Aorta (tissue), 5 donors: ENCODE measurements at regions of chr4 and their contacts with region 1.

Region 1: DNA sequence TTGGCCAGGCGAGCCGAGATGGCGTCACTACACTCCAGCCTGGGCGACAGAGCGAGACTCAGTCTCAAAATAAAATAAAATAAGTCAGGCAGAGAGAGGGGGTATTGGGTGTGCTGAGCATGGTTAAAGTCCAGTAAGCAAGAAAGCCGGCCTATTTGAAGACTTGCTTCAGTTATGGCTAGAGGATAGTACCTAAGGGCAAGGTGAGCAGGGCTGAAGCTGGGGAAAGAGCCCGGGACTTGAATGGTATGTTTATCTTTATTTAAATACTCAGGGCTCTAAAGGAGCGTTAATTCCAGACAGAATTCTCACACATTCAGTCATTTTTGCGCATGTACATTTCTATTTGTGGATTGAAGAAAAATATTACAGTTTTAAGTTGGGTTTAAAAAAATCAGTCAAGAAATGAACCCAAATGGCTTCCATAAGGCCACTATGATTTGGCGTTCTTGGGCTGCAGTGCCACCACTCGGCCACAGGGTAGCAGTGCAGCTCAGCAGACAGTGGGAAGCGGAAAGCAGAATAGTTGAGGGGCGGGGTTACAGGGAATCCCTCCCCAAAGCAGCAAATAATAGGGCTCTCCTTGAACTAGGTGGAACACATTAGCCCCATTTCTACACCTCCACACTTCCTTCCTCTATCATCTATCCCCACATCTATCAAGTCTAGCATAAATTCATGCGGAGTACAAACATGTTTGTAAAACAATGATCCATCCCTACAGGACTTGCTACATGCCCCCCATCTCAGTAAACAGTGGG is 37.2 kb upstream of the SH3D19 start:
- DNase-seq: peak; percentile 83 to 92
- ATAC-seq: peak; percentile 94
- H3K4me3 ChIP-seq: no peak overlapping the region
- H3K27ac ChIP-seq: no peak overlapping the region
- H3K4me1 ChIP-seq: no peaks in the 10 kb centered on the region
- H3K27me3 ChIP-seq: no peaks in the 10 kb centered on the region

Region 2: DNA sequence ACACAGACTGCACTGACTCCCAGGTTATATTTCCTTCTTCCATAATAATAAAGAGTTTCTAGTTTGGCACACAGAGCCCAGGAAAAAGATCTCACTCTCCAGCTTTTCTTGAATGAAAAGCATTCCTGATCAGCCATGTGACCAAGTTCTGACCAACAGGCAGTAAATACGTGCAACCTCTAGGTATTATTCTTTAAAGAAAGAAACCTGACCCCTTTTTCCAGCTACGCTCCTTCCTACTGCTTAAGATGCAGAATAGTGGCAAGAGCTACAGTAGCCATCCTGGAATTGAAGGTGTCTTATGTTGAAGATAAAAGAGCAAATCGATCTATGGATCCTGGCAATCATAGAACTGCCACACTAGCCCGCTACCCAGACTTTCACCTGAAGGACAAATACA is 424.2 kb before region 1 on chr4:
- intact Hi-C with region 1: no loop called
- DNase-seq: no peak
- ATAC-seq: no peak
- H3K4me3 ChIP-seq: no peak overlapping the region
- H3K27ac ChIP-seq: no peak overlapping the region
- H3K4me1 ChIP-seq: peaks cover 0 to 2% of the 10 kb centered on the region in 2 donors
- H3K27me3 ChIP-seq: no peaks in the 10 kb centered on the region

Region 3: DNA sequence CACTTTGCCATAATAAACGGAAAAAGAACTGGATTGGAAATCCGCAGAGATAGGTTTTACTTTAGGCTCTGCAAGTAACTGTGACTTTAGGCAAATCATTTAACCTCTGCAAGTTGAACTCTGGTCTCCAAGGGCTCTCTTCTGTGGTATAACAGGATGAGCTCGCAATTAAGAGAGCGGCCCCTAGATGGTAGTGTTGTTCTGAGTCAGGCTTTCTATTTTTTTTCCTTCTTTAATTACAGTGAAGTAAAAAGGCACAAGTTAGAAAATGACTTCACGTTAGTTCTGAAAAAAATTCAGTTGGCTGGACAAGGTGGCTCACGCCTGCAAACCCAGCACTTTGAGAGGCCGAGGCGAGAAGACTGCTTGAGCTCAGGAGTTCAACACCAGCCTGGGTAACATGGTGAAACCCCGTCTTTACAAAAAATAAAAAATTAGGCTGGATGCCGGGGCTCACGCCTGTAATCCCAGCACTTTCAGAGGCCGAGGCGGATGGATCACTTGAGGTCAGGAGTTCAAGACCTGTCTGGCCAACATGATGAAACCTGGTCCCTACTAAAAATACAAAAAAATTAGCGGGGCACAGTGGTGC is 245.1 kb before region 1 on chr4:
- intact Hi-C with region 1: loop called (anchors 5 to 10 kb)
- DNase-seq: peak in 1 of 2 donors; percentile 55
- ATAC-seq: peak; percentile 84
- H3K4me3 ChIP-seq: no peak overlapping the region
- H3K27ac ChIP-seq: no peak overlapping the region
- H3K4me1 ChIP-seq: no peaks in the 10 kb centered on the region
- H3K27me3 ChIP-seq: no peaks in the 10 kb centered on the region

Region 4: GRCh38 chr4:151129801-151130200 is 232.8 kb before region 1 on chr4:
- intact Hi-C with region 1: no loop called
- DNase-seq: no peak
- ATAC-seq: no peak
- H3K4me3 ChIP-seq: no peak overlapping the region
- H3K27ac ChIP-seq: no peak overlapping the region
- H3K4me1 ChIP-seq: no peaks in the 10 kb centered on the region
- H3K27me3 ChIP-seq: no peaks in the 10 kb centered on the region

Region 5: DNA sequence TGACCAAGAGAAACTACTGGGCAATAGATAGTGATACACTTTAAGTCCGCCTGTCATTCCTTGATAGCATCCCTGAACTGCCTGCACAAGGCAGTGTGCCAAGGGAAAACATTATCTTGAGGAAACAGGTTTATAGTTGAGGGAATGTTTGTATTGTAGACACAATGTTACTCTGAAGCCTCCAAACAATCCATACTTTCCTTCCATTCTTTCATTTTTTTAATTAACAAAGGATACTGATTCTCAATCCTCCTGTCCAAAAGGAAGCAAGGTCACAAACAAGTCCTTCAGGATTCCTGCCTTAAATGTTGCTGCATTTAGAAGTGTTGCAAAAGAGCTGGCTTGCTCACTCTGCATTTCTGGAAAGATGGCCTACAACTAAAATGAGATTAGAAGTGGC is 147.3 kb before region 1 on chr4:
- intact Hi-C with region 1: no loop called
- DNase-seq: no peak
- ATAC-seq: no peak
- H3K4me3 ChIP-seq: no peak overlapping the region
- H3K27ac ChIP-seq: no peak overlapping the region
- H3K4me1 ChIP-seq: no peaks in the 10 kb centered on the region
- H3K27me3 ChIP-seq: no peaks in the 10 kb centered on the region

Region 6: DNA sequence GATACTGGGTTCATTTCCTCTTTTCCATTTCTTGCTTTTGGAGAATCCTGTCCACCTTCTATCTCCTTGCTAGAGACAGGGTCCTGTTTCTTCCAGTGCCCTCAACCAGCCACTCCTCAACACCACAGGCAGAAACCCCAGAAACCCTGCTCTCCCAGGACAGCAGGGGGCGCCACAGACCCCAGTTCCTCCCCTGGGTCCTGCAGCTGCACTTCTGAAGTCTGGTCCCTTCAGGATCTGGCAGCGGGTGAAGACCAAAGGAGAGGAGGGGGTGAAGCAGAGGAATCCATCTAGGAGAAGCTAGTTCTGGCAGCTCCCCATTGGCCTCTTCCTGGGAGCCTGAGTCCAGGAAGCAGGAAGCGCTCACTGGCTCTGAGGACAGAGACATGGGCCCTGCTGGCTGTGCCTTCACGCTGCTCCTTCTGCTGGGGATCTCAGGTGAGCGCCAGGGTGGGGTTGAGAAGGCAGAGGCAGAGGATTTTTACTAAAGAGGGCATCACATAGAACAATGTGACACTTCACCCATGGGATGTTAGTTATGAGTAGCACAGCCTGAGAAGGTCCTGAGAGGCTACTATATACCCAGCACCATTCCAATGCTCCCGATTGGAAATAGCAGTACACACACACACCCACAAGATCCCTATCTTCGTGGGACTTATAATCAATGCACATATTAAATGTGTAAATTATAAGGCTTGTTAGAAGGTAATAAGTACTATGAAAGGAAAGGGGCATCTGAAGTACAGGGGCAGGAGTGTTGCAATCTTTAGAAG is 85.6 kb before region 1 on chr4 and contains the start of gene PRSS48:
- intact Hi-C with region 1: loop called (anchors 1 to 5 kb)
- DNase-seq: peak; percentile 60 to 78
- ATAC-seq: peak; percentile 69
- H3K4me3 ChIP-seq: no peak within 1 kb of the TSS
- H3K27ac ChIP-seq: no peak within 1 kb of the TSS
- H3K4me1 ChIP-seq: no peaks in the 10 kb centered on the region
- H3K27me3 ChIP-seq: no peaks in the 10 kb centered on the region
- total RNA-seq, gene PRSS48: not detected

Region 7: GRCh38 chr4:151563194-151563593 is 200.6 kb after region 1 on chr4:
- intact Hi-C with region 1: no loop called
- DNase-seq: no peak
- ATAC-seq: no peak
- H3K4me3 ChIP-seq: no peak overlapping the region
- H3K27ac ChIP-seq: no peak overlapping the region
- H3K4me1 ChIP-seq: no peaks in the 10 kb centered on the region
- H3K27me3 ChIP-seq: no peaks in the 10 kb centered on the region

Region 8: GRCh38 chr4:151614561-151614960 is 252.0 kb after region 1 on chr4:
- intact Hi-C with region 1: loop called in 1 of 2 experiments (anchors 5 kb)
- DNase-seq: no peak
- ATAC-seq: no peak
- H3K4me3 ChIP-seq: no peak overlapping the region
- H3K27ac ChIP-seq: no peak overlapping the region
- H3K4me1 ChIP-seq: no peaks in the 10 kb centered on the region
- H3K27me3 ChIP-seq: no peaks in the 10 kb centered on the region